Natural killer cell (primary cell): ENCODE measurements at regions of chr4 and their contacts with region 1.

Region 1: GRCh38 chr4:25234390-25235370 is 847 bp downstream of the PI4K2B start:
- DNase-seq: peak; percentile 47 to 83
- ATAC-seq: peak; percentile 64 to 81 (median 69)
- H3K4me3 ChIP-seq: peak overlapping the region; percentile 93
- H3K4me3 Mint-ChIP-seq: peak overlapping the region; percentile 100
- H3K27ac ChIP-seq: peak overlapping the region; percentile 89
- H3K27ac Mint-ChIP-seq: peak overlapping the region; percentile 99 to 100
- H3K4me1 ChIP-seq: peaks cover 17% of the 10 kb centered on the region
- H3K4me1 Mint-ChIP-seq: peaks cover 33 to 39% of the 10 kb centered on the region in 2 donors
- H3K27me3 ChIP-seq: no peaks in the 10 kb centered on the region
- H3K27me3 Mint-ChIP-seq: no peaks in the 10 kb centered on the region
- CTCF ChIP-seq: peak; percentile 57

Region 2: DNA sequence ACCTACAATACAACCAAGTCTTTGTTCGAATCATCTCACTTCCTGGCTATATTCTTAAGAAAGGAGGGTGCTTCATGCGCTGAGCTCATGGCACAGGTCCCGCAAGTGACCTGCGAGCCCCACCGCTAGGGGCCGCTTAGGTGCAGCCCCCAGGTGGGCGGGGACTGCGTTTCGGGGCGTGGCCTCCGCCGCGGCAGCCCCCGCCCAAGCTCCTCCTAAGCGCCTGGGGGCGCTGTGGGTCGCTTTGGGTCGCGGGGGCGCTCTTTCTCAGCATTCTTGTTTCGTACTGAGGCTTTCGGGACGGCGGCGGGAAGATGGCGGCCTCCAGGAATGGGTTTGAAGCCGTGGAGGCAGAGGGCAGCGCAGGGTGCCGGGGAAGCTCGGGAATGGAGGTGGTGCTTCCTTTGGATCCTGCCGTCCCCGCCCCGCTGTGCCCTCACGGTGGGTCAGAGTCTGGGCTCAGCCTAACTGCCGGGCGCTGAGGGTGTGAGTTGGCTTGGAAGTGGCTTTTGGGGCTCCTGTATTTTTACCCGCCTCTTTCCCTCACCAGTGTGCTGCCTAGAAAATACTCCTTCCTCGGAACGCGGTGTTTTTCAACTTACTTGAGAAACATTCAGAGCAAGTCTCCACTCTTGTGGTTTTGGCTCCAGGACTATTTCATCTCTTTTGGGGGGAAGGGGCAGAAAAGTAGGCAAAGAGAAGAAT is 78.0 kb after region 1 on chr4 and contains the start of gene ZCCHC4:
- intact Hi-C with region 1: loop called (anchors 1 kb)
- DNase-seq: peak; percentile 94 to 97
- ATAC-seq: peak; percentile 99 to 100 (median 99)
- H3K4me3 ChIP-seq: peak within 1 kb of the TSS; percentile 63
- H3K4me3 Mint-ChIP-seq: peak within 1 kb of the TSS; percentile 99
- H3K27ac ChIP-seq: peak within 1 kb of the TSS; percentile 60
- H3K27ac Mint-ChIP-seq: peak within 1 kb of the TSS; percentile 93 to 99
- H3K4me1 ChIP-seq: peaks cover 8% of the 10 kb centered on the region
- H3K4me1 Mint-ChIP-seq: peaks cover 12 to 18% of the 10 kb centered on the region in 2 donors
- H3K27me3 ChIP-seq: no peaks in the 10 kb centered on the region
- H3K27me3 Mint-ChIP-seq: peaks cover 0 to 7% of the 10 kb centered on the region in 2 donors
- CTCF ChIP-seq: peak; percentile 100
- total RNA-seq, gene ZCCHC4: 9.4 to 12.0 (median 10.9) TPM